ENCODE measurements at regions of chr6 and their contacts with region 1.

Region 1: DNA sequence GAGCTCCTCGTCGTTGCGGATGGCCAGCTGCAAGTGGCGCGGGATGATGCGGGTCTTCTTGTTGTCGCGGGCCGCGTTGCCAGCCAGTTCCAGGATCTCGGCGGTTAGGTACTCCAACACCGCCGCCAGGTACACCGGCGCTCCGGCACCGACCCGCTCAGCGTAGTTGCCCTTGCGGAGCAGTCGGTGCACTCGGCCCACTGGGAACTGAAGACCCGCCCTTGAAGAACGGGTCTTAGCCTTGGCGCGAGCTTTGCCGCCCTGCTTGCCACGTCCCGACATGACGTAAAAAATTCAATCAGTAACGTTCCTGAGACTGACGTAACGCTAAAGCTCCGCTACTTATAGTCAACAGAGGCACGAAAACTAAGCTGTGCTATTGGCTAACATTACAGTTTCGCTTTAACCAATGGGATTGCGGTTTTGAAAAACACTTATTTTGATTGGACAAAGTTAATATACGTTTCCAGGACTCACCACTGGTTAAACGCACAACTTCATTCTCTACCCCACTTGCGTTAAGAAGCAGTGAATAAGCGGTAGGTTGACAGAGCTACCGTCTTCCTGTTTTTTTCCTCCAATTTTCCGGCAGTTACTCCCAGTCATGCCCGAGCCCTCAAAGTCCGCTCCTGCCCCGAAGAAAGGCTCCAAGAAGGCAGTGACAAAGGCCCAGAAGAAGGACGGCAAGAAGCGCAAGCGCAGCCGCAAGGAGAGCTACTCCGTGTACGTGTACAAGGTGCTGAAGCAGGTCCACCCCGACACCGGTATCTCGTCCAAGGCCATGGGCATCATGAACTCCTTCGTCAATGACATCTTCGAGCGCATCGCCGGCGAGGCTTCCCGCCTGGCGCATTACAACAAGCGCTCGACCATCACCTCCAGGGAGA is 73.9 kb downstream of the OR2B2 start:
- DNase-seq: peak; percentile 99 to 100 (median 99)
- H3K4me3 ChIP-seq: peak overlapping the region; percentile 64 to 97 (median 90)
- H3K27ac ChIP-seq: peak overlapping the region; percentile 94 to 98
- H3K4me1 ChIP-seq: peaks cover 22 to 46% (median 35%) of the 10 kb centered on the region in 4 experiments
- H3K27me3 ChIP-seq: no peaks in the 10 kb centered on the region

Region 2: DNA sequence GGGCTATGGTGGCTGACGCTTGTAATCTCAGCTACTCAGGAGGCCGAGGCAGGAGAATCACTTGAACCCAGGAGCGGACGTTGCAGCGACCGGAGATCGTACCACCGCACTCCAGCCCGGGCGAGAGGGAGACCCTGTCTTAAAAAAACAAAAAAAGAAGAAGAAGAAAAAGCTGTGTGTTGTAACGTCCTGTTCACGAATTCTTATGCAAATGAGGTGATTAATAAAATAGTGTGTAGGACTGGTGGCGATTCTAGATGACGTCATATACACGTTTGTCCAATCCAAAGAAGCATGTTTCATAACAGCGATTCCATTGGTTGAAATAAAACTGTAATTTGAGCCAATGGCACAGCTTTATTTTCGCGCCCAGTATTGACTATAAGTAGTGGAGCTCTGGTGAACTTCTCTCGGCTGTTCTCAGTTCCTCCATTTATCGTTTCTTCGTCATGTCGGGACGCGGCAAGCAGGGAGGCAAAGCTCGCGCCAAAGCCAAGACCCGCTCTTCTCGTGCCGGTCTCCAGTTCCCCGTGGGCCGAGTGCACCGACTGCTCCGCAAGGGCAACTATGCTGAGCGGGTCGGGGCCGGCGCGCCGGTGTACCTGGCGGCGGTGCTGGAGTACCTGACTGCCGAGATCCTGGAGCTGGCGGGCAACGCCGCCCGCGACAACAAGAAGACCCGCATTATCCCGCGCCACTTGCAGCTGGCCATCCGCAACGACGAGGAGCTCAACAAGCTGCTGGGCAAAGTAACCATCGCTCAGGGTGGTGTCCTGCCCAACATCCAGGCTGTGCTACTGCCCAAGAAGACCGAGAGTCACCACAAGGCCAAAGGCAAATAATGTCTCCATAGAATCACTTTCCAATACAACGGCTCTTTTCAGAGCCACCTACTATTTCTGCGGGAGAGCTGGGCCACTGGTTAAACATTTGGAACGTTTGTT is 26.9 kb after region 1 on chr6:
- CTCF ChIA-PET with region 1: interaction called, 39 read pairs
- POLR2A ChIA-PET with region 1: interaction called, 58 read pairs
- DNase-seq: peak; percentile 99
- H3K4me3 ChIP-seq: peak overlapping the region; percentile 72 to 93 (median 82)
- H3K27ac ChIP-seq: peak overlapping the region; percentile 65 to 80
- H3K4me1 ChIP-seq: peaks cover 16 to 55% (median 35%) of the 10 kb centered on the region in 4 experiments
- H3K27me3 ChIP-seq: no peaks in the 10 kb centered on the region

Region 3: DNA sequence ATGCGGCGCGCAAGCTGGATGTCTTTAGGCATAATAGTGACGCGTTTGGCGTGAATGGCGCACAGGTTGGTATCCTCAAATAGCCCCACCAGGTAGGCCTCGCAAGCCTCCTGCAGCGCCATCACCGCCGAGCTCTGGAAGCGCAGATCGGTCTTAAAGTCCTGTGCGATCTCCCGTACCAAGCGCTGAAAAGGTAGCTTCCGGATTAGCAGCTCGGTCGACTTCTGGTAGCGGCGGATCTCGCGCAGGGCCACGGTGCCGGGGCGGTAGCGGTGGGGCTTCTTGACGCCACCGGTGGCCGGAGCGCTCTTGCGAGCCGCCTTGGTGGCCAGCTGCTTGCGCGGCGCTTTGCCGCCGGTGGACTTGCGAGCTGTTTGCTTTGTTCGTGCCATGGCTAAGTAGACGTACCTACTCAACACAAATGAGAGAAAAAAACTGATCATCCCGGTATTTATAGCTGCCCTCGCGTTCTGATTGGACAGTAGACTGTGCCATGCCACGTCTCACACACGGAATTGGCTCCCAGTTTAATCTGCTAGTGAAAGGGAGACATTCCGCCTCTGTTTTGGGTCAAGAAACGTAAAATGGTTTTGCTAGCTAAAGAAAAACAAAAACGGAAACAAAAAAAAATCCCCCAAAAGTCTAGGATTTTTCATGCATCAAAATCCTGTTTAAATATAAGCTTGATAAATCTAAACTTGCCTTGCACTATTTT is 33.8 kb after region 1 on chr6:
- CTCF ChIA-PET with region 1: interaction called, 39 read pairs
- POLR2A ChIA-PET with region 1: interaction called, 58 read pairs
- DNase-seq: peak; percentile 97 to 98 (median 98)
- H3K4me3 ChIP-seq: peak overlapping the region; percentile 40 to 99 (median 85)
- H3K27ac ChIP-seq: peak overlapping the region; percentile 82 to 92
- H3K4me1 ChIP-seq: peaks cover 9 to 56% (median 39%) of the 10 kb centered on the region in 4 experiments
- H3K27me3 ChIP-seq: no peaks in the 10 kb centered on the region